ENCODE measurements at regions of chrX and their contacts with region 1.

Region 1: DNA sequence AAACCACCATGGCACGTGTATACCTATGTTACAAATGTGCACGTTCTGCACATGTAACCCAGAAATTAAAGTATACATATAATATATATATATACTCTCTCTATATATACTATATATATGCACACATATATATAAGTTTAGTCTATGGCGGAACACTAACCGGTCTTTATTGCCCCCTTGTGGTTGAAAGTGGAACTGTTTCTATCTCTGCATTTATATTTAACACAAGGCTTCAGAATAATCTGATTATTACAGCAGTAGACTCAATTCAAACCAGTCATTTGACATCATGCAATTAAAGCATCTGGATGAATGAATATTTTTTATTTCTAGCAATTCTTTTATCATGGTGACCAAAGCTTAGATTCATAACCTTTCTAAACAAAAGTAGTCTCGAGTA is 14.6 kb downstream of the RAB9B start:
- DNase-seq: no peak

Region 2: GRCh38 chrX:103533511-103534216 is 283.8 kb before region 1 on chrX:
- intact Hi-C with region 1: loop called in 1 of 2 experiments (anchors 2 kb)
- DNase-seq: peak; percentile 88

Region 3: DNA sequence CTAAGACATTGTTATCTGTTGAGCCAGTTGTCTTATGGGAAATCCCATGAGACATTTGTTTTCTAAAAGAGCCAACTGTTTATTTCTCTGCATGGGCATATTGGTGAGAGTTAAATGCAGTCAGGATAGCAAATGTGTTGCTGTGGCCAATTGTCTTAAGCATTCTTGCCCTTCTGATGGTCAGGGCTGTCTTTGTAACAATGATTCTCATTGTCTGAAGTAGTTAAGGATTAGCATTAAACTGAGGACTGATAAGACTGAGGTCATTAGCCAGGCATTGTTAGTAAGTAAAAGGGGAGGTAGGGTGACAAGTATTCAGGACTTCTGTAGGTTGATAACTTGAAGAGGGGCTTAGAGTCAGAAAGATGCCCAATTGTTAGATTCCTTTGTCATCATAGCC is 119.8 kb before region 1 on chrX:
- intact Hi-C with region 1: loop called in 1 of 2 experiments (anchors 10 kb)
- DNase-seq: no peak

Region 4: GRCh38 chrX:103711533-103712369 is 105.8 kb before region 1 on chrX:
- intact Hi-C with region 1: loop called in 1 of 2 experiments (anchors 10 kb)
- DNase-seq: no peak

Measured in posterior vena cava (tissue), 2 donors.